CD14-positive monocyte (primary cell): ENCODE measurements at regions of chr6 and their contacts with region 1.

Region 1: GRCh38 chr6:18387061-18387721 is at the start of gene RNF144B:
- DNase-seq: peak; percentile 74 to 87 (median 77)
- H3K4me3 ChIP-seq: peak within 1 kb of the TSS; percentile 88 to 90 (median 89)
- H3K4me3 Mint-ChIP-seq: peak within 1 kb of the TSS; percentile 93 to 99
- H3K27ac ChIP-seq: peak within 1 kb of the TSS; percentile 85 to 89
- H3K27ac Mint-ChIP-seq: peak within 1 kb of the TSS; percentile 92 to 98 (median 97)
- H3K4me1 ChIP-seq: peaks cover 34 to 40% of the 10 kb centered on the region in 2 donors
- H3K4me1 Mint-ChIP-seq: peaks cover 44% of the 10 kb centered on the region
- H3K27me3 ChIP-seq: no peaks in the 10 kb centered on the region
- H3K27me3 Mint-ChIP-seq: peaks cover 0 to 3% (median 2%) of the 10 kb centered on the region in 3 donors
- CTCF ChIP-seq: no peak
- polyA plus RNA-seq, gene RNF144B: 25.6 to 31.0 (median 27.9) TPM

Region 2: DNA sequence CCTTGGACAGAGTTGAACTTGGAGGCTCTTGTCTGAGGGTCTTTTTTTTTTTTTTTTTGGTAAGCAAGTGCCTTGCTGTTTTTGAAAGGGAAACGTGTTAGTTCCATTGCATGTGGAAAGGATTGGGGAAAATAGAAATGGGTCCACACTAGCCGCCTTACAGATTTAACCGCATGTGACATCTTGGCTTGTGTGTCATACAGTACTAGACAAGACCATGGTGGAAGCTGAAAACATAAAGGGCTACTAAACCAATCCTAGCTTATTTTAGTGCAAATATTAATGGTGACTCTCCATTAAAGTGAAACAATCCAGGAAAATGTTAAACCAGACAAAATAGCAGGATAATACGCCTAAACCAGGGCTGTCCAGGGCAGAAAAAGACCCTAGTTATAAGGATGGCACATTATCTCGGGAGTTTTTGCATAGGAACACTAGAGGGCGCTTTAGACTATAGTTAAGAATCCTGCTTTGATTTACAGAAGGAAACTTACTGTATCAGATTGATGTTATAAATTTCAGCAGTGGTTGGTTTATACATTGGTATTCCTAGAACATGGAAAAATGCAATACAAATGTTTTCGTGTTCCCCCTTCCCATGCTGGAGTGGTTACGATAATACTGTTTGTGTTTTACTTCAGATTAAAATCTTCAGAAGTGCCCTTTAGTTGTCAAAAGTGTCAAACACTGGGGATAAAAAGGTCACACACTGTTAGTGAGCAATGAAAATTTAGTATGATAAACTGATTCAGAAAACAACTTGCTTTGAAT is 63.1 kb before region 1 on chr6:
- intact Hi-C with region 1: loop called (anchors 2 to 10 kb)
- DNase-seq: peak; percentile 40 to 77 (median 64)
- H3K4me3 ChIP-seq: no peak overlapping the region
- H3K4me3 Mint-ChIP-seq: no peak overlapping the region
- H3K27ac ChIP-seq: no peak overlapping the region
- H3K27ac Mint-ChIP-seq: peak overlapping the region in 3 of 7 donors; percentile 27 to 63 (median 33)
- H3K4me1 ChIP-seq: peaks cover 32 to 36% of the 10 kb centered on the region in 2 donors
- H3K4me1 Mint-ChIP-seq: peaks cover 35% of the 10 kb centered on the region
- H3K27me3 ChIP-seq: no peaks in the 10 kb centered on the region
- H3K27me3 Mint-ChIP-seq: peaks cover 0 to 2% (median 0%) of the 10 kb centered on the region in 3 donors
- CTCF ChIP-seq: peak; percentile 88

Region 3: DNA sequence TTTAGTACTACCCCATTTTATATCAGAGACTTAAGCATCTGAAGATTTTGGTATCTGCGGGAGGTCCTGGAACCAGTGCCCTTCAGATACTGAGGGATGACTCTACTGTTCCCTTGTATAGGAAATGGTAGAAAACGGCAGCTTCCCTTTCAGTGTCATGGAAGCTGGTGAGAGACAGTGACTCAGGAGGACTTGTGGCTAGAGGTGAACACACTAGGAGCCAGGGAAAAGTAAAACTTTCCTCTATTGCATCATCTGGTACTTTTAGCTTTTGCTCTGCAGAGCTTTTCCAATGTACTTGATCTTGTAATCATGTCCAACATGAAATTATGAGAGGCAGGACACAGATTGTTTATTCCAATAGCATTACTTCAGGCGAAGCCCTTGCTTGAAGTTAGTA is 45.0 kb after region 1 on chr6:
- intact Hi-C with region 1: loop called in 1 of 2 experiments (anchors 10 kb)
- DNase-seq: peak in 2 of 3 donors; percentile 60 to 95
- H3K4me3 ChIP-seq: no peak overlapping the region
- H3K4me3 Mint-ChIP-seq: no peak overlapping the region
- H3K27ac ChIP-seq: peak overlapping the region in 1 of 2 donors; percentile 17
- H3K27ac Mint-ChIP-seq: peak overlapping the region in 5 of 7 donors; percentile 2 to 79 (median 28)
- H3K4me1 ChIP-seq: peaks cover 26 to 47% of the 10 kb centered on the region in 2 donors
- H3K4me1 Mint-ChIP-seq: peaks cover 60% of the 10 kb centered on the region
- H3K27me3 ChIP-seq: no peaks in the 10 kb centered on the region
- H3K27me3 Mint-ChIP-seq: no peaks in the 10 kb centered on the region
- CTCF ChIP-seq: no peak

Region 4: DNA sequence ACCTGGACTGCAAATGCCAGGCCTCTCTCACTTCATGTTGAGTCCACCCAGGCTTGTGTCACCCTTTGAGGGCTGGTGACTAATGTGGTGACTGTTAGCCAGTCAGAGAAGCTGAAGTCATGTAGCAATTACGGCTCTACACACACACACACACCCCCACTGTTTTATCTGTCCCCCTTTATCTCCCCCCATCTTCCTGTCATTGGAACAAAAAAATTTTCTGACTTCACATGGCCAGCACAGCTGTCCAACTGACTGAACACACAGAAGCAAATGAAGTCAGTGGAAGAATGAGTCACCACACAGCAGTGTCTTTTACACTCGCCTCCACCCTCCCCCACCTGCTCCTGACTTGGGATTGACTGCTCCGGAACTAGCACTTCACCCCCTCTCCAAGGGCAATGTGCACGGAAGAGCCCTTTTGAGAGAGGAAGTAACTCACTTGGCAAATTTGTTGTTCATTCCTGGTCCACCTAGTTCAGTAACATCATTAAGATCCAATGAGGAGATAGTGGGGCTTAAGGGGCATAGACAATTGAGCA is 197.9 kb after region 1 on chr6:
- intact Hi-C with region 1: no loop called
- DNase-seq: peak in 1 of 3 donors; percentile 27
- H3K4me3 ChIP-seq: no peak overlapping the region
- H3K4me3 Mint-ChIP-seq: no peak overlapping the region
- H3K27ac ChIP-seq: no peak overlapping the region
- H3K27ac Mint-ChIP-seq: no peak overlapping the region
- H3K4me1 ChIP-seq: no peaks in the 10 kb centered on the region
- H3K4me1 Mint-ChIP-seq: no peaks in the 10 kb centered on the region
- H3K27me3 ChIP-seq: no peaks in the 10 kb centered on the region
- H3K27me3 Mint-ChIP-seq: peaks cover 0 to 2% (median 2%) of the 10 kb centered on the region in 3 donors
- CTCF ChIP-seq: no peak